Activated CD4-positive, alpha-beta memory T cell treated with anti-CD3 and anti-CD28 coated beads for 36 hours (primary cell): ENCODE measurements at regions of chr5 and their contacts with region 1.

Region 1: GRCh38 chr5:77645158-77645994 is 6.9 kb upstream of the OTP start:
- DNase-seq: peak; percentile 53
- H3K4me3 Mint-ChIP-seq: peak overlapping the region; percentile 48
- H3K27ac Mint-ChIP-seq: no peak overlapping the region
- H3K4me1 Mint-ChIP-seq: peaks cover 27% of the 10 kb centered on the region
- H3K27me3 Mint-ChIP-seq: peaks cover 66% of the 10 kb centered on the region

Region 2: GRCh38 chr5:77607324-77607723 is 38.1 kb before region 1 on chr5:
- CTCF ChIA-PET with region 1: no interaction called
- POLR2A ChIA-PET with region 1: no interaction called
- intact Hi-C with region 1: no loop called
- DNase-seq: no peak
- H3K4me3 Mint-ChIP-seq: no peak overlapping the region
- H3K27ac Mint-ChIP-seq: no peak overlapping the region
- H3K4me1 Mint-ChIP-seq: no peaks in the 10 kb centered on the region
- H3K27me3 Mint-ChIP-seq: peaks cover 26% of the 10 kb centered on the region

Region 3: GRCh38 chr5:77630258-77631089 is 14.9 kb before region 1 on chr5:
- CTCF ChIA-PET with region 1: no interaction called
- POLR2A ChIA-PET with region 1: no interaction called
- intact Hi-C with region 1: loop called (anchors 2 kb)
- DNase-seq: peak; percentile 76
- H3K4me3 Mint-ChIP-seq: peak overlapping the region; percentile 74
- H3K27ac Mint-ChIP-seq: no peak overlapping the region
- H3K4me1 Mint-ChIP-seq: peaks cover 20% of the 10 kb centered on the region
- H3K27me3 Mint-ChIP-seq: peaks cover 67% of the 10 kb centered on the region

Region 4: GRCh38 chr5:77972469-77973252 is 327.3 kb after region 1 on chr5:
- CTCF ChIA-PET with region 1: no interaction called
- POLR2A ChIA-PET with region 1: no interaction called
- intact Hi-C with region 1: loop called (anchors 5 kb)
- DNase-seq: peak; percentile 44
- H3K4me3 Mint-ChIP-seq: peak overlapping the region; percentile 59
- H3K27ac Mint-ChIP-seq: no peak overlapping the region
- H3K4me1 Mint-ChIP-seq: peaks cover 7% of the 10 kb centered on the region
- H3K27me3 Mint-ChIP-seq: peaks cover 33% of the 10 kb centered on the region

Region 5: DNA sequence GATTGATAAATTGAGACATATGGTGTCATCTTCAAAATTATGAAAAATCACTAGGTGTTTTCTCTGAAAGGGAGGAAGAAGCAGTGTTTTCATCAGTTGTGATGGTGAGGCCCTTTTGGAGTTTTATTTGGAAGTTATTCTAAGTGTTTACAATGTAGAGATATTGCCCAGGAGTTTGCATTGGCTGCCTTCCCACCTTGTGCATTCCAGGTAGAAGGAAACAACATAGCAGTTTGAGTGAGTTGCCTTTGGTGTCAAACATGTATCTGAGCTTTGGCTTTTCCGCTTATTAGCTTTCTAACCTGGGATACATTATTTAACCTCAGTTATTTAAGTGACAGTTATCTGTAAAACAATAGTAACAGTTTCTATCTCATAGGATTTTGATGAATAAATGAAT is 837.6 kb after region 1 on chr5:
- CTCF ChIA-PET with region 1: no interaction called
- POLR2A ChIA-PET with region 1: no interaction called
- intact Hi-C with region 1: no loop called
- DNase-seq: no peak
- H3K4me3 Mint-ChIP-seq: no peak overlapping the region
- H3K27ac Mint-ChIP-seq: no peak overlapping the region
- H3K4me1 Mint-ChIP-seq: peaks cover 7% of the 10 kb centered on the region
- H3K27me3 Mint-ChIP-seq: no peaks in the 10 kb centered on the region